Left lung (tissue), 14 donors: ENCODE measurements at regions of chr17 and their contacts with region 1.

Region 1: DNA sequence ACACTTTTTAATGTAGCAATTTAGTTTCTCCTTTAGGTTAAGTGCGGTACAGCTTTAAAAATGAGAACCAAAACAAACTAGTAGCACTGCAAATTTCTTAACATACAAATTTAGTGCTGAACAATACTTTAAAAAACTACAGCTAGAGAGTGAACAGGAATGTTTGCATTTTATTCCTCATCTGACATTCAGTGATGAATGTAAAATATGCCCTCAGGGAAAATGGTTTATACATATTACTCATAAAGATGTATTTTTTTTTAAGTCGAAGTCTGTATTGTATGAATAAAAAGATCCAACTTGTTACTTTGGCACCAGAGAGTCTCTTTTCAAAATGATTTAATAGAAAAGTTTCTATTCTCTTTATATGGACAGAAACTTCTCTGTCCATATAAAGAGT is 96.8 kb downstream of the BRIP1 start:
- DNase-seq: no peak
- ATAC-seq: no peak
- H3K4me3 ChIP-seq: no peak overlapping the region
- H3K27ac ChIP-seq: no peak overlapping the region
- H3K4me1 ChIP-seq: no peaks in the 10 kb centered on the region
- H3K27me3 ChIP-seq: no peaks in the 10 kb centered on the region
- CTCF ChIP-seq: no peak

Region 2: GRCh38 chr17:61619493-61619892 is 147.0 kb before region 1 on chr17:
- intact Hi-C with region 1: no loop called
- DNase-seq: no peak
- ATAC-seq: no peak
- H3K4me3 ChIP-seq: no peak overlapping the region
- H3K27ac ChIP-seq: no peak overlapping the region
- H3K4me1 ChIP-seq: no peaks in the 10 kb centered on the region
- H3K27me3 ChIP-seq: no peaks in the 10 kb centered on the region
- CTCF ChIP-seq: no peak

Region 3: DNA sequence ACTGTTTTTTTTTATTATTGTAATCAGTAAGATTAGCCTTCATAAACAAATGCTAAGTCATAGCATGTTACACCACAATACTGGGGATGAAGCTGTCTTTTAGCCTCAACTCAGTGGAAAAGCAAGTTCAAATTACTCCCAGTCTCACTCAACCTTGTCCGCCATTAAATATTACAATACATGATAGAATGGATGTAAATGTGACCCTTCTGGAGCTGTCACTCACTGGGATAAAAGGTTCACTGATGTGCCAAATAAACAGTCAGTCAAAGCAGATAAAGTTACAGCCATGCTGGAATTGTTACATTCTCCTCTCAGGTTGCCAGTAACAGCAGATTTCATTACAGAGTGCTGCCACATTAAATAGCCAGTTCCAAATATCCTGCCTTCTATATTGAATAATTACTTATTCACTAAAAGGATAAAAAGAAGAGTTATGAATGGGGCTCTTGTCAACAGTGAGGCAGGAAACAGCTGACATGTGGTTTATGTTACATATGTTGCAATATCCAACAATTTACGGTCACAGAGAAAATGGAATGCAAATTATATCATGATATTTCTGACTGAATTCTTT is 43.4 kb after region 1 on chr17:
- intact Hi-C with region 1: loop called in 1 of 2 experiments (anchors 10 kb)
- DNase-seq: peak in 2 of 4 donors; percentile 51 to 58
- ATAC-seq: no peak
- H3K4me3 ChIP-seq: no peak overlapping the region
- H3K27ac ChIP-seq: no peak overlapping the region
- H3K4me1 ChIP-seq: peaks cover 0 to 9% of the 10 kb centered on the region in 2 donors
- H3K27me3 ChIP-seq: no peaks in the 10 kb centered on the region
- CTCF ChIP-seq: no peak

Region 4: GRCh38 chr17:62017610-62018261 is 251.2 kb after region 1 on chr17:
- intact Hi-C with region 1: no loop called
- DNase-seq: no peak
- ATAC-seq: no peak
- H3K4me3 ChIP-seq: no peak overlapping the region
- H3K27ac ChIP-seq: no peak overlapping the region
- H3K4me1 ChIP-seq: no peaks in the 10 kb centered on the region
- H3K27me3 ChIP-seq: no peaks in the 10 kb centered on the region
- CTCF ChIP-seq: no peak